ENCODE measurements at regions of chr3 and their contacts with region 1.

Region 1: DNA sequence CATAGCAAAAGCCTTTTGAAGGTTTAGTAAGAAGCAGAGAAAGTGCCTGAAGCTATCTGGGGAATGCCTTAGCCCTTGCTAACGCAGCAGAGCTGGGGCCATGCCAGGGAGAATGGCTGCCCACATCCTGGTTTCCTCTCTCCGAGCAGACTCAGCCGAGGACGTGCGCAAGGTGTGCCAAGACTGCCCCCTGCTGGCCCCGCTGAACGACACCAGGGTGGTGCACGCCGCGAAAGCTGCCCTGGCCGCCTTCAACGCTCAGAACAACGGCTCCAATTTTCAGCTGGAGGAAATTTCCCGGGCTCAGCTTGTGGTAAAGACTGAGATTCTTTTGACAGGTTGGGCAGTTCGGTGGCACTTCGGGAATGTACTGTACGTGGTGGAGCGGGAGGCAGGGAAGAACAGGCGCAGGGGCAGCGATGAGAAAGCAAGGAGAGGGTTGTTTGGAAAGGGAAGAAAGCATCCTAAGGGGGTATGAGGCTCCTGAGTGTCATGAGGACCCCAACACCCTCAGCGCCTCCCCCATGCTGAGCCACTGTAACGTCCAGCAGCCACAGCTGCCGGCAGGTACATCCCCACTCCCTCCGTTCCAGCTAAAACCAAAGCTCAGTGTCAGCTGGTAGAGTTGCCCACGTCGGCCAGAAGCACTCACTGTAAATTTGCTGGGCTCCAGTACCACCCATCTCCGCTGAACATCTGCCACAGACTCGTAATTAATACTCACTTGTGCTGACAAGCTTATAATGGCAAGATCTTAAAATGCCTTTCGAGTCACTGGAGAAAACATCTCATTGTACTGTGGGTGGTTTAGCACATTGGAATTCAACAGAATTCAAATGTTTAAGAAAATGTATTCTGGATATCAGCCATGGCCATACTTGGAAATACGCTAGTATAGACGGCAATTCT is 4.4 kb downstream of the AHSG start:
- DNase-seq: peak; percentile 81 to 92 (median 86)
- H3K4me3 ChIP-seq: no peak overlapping the region
- H3K4me3 Mint-ChIP-seq: peak overlapping the region; percentile 37 to 77 (median 63)
- H3K27ac ChIP-seq: no peak overlapping the region
- H3K27ac Mint-ChIP-seq: peak overlapping the region in 5 of 7 donors; percentile 41 to 72 (median 69)
- H3K4me1 ChIP-seq: peaks cover 18% of the 10 kb centered on the region
- H3K4me1 Mint-ChIP-seq: peaks cover 10 to 28% (median 20%) of the 10 kb centered on the region in 4 donors
- H3K27me3 ChIP-seq: no peaks in the 10 kb centered on the region
- H3K27me3 Mint-ChIP-seq: peaks cover 9 to 18% of the 10 kb centered on the region in 2 donors

Region 2: DNA sequence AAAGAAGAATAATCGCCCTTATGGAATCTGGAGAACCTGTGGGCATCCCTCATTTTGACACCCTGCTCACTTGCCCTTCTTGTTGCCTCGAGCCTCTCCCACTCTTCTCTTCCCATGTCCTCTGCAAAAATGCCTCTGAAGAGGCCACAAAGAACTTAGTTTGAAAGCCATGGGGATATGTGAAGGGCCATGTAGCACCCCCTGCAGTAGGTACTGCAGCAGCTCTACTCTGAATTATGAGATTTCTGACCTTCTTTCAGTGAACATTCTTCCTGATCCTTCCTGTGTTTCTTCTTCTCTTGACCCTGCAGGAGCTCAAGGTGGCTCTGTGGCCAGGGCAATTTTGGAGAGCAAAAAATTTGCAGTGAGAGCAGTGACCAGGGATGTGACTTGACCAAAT is 649.1 kb before region 1 on chr3:
- CTCF ChIA-PET with region 1: interaction called, 12 read pairs
- POLR2A ChIA-PET with region 1: no interaction called
- intact Hi-C with region 1: no loop called
- DNase-seq: no peak
- H3K4me3 ChIP-seq: no peak overlapping the region
- H3K4me3 Mint-ChIP-seq: no peak overlapping the region
- H3K27ac ChIP-seq: no peak overlapping the region
- H3K27ac Mint-ChIP-seq: no peak overlapping the region
- H3K4me1 ChIP-seq: no peaks in the 10 kb centered on the region
- H3K4me1 Mint-ChIP-seq: no peaks in the 10 kb centered on the region
- H3K27me3 ChIP-seq: no peaks in the 10 kb centered on the region
- H3K27me3 Mint-ChIP-seq: peaks cover 0 to 2% of the 10 kb centered on the region in 2 donors

Region 3: DNA sequence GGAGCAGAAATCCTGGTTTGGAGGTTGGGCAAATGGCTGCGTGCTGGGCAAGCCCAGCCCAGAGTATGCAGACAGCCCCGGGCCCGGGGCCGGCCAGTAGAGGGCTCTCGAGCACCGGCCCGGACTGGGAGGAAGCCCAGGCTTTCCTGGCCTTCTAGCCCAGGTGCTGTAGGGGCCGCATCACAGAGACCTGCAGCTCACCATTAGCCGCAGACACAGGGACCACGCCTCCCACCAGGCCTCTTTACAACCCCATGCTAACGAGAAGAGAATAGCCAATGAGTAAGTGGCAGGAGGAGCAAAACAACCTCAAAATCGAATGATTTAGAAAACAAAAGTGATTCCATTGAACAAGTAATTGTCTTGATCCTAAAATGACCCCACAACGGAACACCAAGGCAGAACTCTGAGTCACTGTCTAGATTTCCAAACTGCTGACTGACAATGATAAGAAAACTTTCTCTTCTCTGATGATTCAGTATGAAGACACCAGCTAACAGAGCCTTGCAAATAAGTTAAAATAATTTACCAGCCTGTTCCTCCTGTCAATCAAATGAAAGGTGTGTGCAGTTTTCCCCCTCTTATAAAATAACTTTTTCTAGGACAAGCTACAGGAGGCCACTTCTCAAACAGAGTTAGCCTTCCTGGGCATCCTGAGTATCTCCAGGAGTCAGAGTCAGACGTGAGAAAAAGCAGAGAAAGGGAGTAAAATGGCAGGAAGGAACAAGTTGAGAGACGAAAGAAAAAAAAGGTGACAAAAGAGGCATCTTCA is 357.5 kb before region 1 on chr3:
- CTCF ChIA-PET with region 1: interaction called, 58 read pairs
- POLR2A ChIA-PET with region 1: no interaction called
- intact Hi-C with region 1: loop called (anchors 1 kb)
- DNase-seq: peak; percentile 49 to 61 (median 59)
- H3K4me3 ChIP-seq: no peak overlapping the region
- H3K4me3 Mint-ChIP-seq: peak overlapping the region in 4 of 8 donors; percentile 30 to 56 (median 43)
- H3K27ac ChIP-seq: no peak overlapping the region
- H3K27ac Mint-ChIP-seq: peak overlapping the region in 6 of 7 donors; percentile 5 to 89 (median 80)
- H3K4me1 ChIP-seq: peaks cover 14% of the 10 kb centered on the region
- H3K4me1 Mint-ChIP-seq: peaks cover 8 to 16% (median 12%) of the 10 kb centered on the region in 4 donors
- H3K27me3 ChIP-seq: no peaks in the 10 kb centered on the region
- H3K27me3 Mint-ChIP-seq: peaks cover 2% of the 10 kb centered on the region in 2 donors

Region 4: GRCh38 chr3:186583831-186584230 is 33.5 kb before region 1 on chr3:
- CTCF ChIA-PET with region 1: interaction called, 255 read pairs
- POLR2A ChIA-PET with region 1: no interaction called
- intact Hi-C with region 1: no loop called
- DNase-seq: no peak
- H3K4me3 ChIP-seq: no peak overlapping the region
- H3K4me3 Mint-ChIP-seq: no peak overlapping the region
- H3K27ac ChIP-seq: no peak overlapping the region
- H3K27ac Mint-ChIP-seq: no peak overlapping the region
- H3K4me1 ChIP-seq: no peaks in the 10 kb centered on the region
- H3K4me1 Mint-ChIP-seq: peaks cover 0 to 3% (median 2%) of the 10 kb centered on the region in 4 donors
- H3K27me3 ChIP-seq: no peaks in the 10 kb centered on the region
- H3K27me3 Mint-ChIP-seq: no peaks in the 10 kb centered on the region

Region 5: DNA sequence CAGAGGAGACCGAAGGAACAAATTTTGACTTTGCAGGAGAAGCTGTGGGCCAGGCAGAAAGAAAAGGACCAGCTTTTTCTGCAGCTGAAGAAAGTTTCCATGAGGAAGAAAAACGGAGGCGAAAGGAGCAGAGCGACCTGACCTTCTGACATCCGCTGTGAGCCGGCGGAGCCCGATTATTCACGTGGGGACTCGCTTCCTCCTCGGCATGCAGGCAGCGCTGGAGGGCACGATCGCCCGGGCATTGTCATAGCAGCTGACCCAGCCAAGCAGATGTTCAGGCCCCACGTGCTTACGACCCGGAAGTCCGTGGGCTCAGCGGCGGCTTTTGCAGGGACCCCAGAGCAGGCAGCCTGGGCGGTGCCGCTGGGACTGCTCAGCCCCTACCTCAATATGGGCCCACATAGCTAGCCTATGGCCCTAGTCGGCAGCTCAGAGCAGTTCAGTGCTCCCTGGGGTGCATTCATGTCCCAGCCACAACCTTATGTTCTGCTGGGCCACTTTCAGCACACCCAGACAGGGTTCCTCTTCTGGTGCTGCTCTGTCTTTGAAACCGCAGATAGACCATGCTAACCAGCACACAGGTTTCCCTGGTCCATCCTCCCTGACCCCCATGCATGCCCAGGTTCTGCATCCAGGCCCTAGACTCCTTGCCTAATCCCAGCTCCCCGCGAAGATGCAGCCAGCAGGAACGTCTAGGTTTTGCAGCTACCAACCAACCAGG is 155.6 kb after region 1 on chr3:
- CTCF ChIA-PET with region 1: interaction called, 27 read pairs
- POLR2A ChIA-PET with region 1: interaction called, 8 read pairs
- intact Hi-C with region 1: no loop called
- DNase-seq: peak; percentile 46 to 63 (median 49)
- H3K4me3 ChIP-seq: peak overlapping the region; percentile 37 to 72
- H3K4me3 Mint-ChIP-seq: peak overlapping the region; percentile 88 to 99 (median 96)
- H3K27ac ChIP-seq: peak overlapping the region; percentile 61
- H3K27ac Mint-ChIP-seq: peak overlapping the region; percentile 81 to 95 (median 95)
- H3K4me1 ChIP-seq: peaks cover 12% of the 10 kb centered on the region
- H3K4me1 Mint-ChIP-seq: peaks cover 0 to 18% (median 13%) of the 10 kb centered on the region in 4 donors
- H3K27me3 ChIP-seq: no peaks in the 10 kb centered on the region
- H3K27me3 Mint-ChIP-seq: no peaks in the 10 kb centered on the region

Region 6: GRCh38 chr3:186821429-186822367 is 204.4 kb after region 1 on chr3:
- CTCF ChIA-PET with region 1: interaction called, 278 read pairs
- POLR2A ChIA-PET with region 1: interaction called, 6 read pairs
- intact Hi-C with region 1: loop called (anchors 1 kb)
- DNase-seq: peak in 4 of 5 donors; percentile 42 to 56 (median 46)
- H3K4me3 ChIP-seq: no peak overlapping the region
- H3K4me3 Mint-ChIP-seq: no peak overlapping the region
- H3K27ac ChIP-seq: no peak overlapping the region
- H3K27ac Mint-ChIP-seq: peak overlapping the region in 1 of 7 donors; percentile 4
- H3K4me1 ChIP-seq: peaks cover 13% of the 10 kb centered on the region
- H3K4me1 Mint-ChIP-seq: peaks cover 5 to 15% (median 11%) of the 10 kb centered on the region in 4 donors
- H3K27me3 ChIP-seq: no peaks in the 10 kb centered on the region
- H3K27me3 Mint-ChIP-seq: peaks cover 3 to 8% of the 10 kb centered on the region in 2 donors

Region 7: DNA sequence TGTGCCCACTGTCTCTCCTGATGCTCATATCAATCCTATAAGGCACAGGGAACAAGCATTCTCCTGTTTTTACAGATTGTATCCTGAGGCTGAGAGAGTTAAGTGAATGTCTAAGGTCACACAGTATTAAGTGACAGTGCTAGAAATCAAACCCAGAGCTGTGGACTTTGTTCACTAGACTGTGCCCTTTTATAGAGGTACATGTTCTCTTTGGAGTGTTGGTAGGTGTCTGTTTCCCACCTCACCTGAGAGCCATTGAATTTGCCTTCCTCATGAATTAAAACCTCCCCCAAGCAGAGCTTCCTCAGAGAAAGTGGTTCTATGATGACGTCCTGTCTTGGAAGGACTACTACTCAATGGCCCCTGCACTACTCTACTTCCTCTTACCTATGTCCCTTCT is 237.7 kb after region 1 on chr3:
- CTCF ChIA-PET with region 1: no interaction called
- POLR2A ChIA-PET with region 1: no interaction called
- intact Hi-C with region 1: no loop called
- DNase-seq: no peak
- H3K4me3 ChIP-seq: no peak overlapping the region
- H3K4me3 Mint-ChIP-seq: no peak overlapping the region
- H3K27ac ChIP-seq: no peak overlapping the region
- H3K27ac Mint-ChIP-seq: no peak overlapping the region
- H3K4me1 ChIP-seq: peaks cover 3% of the 10 kb centered on the region
- H3K4me1 Mint-ChIP-seq: peaks cover 5 to 12% (median 8%) of the 10 kb centered on the region in 4 donors
- H3K27me3 ChIP-seq: no peaks in the 10 kb centered on the region
- H3K27me3 Mint-ChIP-seq: no peaks in the 10 kb centered on the region